Heart right ventricle (tissue), 16 donors: ENCODE measurements at regions of chr16 and their contacts with region 1.

Region 1: DNA sequence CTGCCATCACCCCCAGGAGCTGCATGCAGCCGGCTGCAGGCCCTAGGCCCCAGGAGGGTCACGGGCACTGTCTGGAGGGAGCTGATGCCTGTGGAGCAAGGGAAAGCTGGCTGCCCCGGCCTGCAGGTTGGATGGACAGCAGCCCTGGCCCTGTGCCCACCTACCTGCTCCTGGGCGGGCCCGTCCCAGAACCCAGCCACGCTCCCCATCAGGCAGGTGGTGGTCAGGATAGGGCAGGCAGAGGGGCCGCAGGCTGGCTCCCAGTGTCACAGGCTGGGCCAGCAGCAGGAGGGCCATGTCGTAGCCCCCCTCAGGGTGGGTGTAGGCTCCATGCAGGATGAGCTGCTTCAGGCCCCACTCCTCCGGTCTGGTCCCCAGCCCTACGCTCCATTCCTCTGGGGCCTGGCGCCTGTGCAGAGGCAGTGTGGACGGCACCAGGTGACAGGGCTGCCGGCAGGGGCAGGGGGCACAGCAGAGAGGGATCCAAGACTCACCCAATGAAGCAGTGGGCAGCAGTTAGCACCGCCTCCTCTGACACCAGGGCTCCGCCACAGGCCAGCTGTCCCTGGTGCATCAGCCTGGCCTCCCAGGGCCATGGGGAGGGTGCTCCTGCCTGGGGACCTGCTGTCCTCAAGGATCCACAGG is 4.0 kb downstream of the PRSS53 start:
- DNase-seq: no peak
- ATAC-seq: peak in 2 of 8 donors; percentile 16 to 22
- H3K4me3 ChIP-seq: no peak overlapping the region
- H3K27ac ChIP-seq: no peak overlapping the region
- H3K4me1 ChIP-seq: peaks cover 0 to 16% (median 6%) of the 10 kb centered on the region in 9 donors
- H3K27me3 ChIP-seq: no peaks in the 10 kb centered on the region
- CTCF ChIP-seq: no peak

Region 2: GRCh38 chr16:31052124-31052523 is 32.6 kb before region 1 on chr16:
- intact Hi-C with region 1: loop called in 1 of 10 experiments (anchors 5 kb)
- DNase-seq: no peak
- ATAC-seq: peak in 1 of 8 donors; percentile 86
- H3K4me3 ChIP-seq: no peak overlapping the region
- H3K27ac ChIP-seq: peak overlapping the region in 1 of 10 donors; percentile 59
- H3K4me1 ChIP-seq: peaks cover 0 to 17% (median 0%) of the 10 kb centered on the region in 9 donors
- H3K27me3 ChIP-seq: no peaks in the 10 kb centered on the region
- CTCF ChIP-seq: no peak